ENCODE measurements at regions of chr2 and their contacts with region 1.

Region 1: GRCh38 chr2:100262555-100263320 is 59.6 kb downstream of the LONRF2 start:
- DNase-seq: peak; percentile 18
- H3K4me3 ChIP-seq: no peak overlapping the region
- H3K27ac ChIP-seq: no peak overlapping the region
- H3K4me1 ChIP-seq: no peaks in the 10 kb centered on the region
- H3K27me3 ChIP-seq: no peaks in the 10 kb centered on the region
- CTCF ChIP-seq: peak; percentile 90 to 96

Region 2: GRCh38 chr2:99725820-99726219 is 536.9 kb before region 1 on chr2:
- CTCF ChIA-PET with region 1: no interaction called
- dilution Hi-C with region 1: no loop called
- in situ Hi-C with region 1: no loop called
- intact Hi-C with region 1: loop called (anchors 10 kb)
- DNase-seq: no peak
- H3K4me3 ChIP-seq: no peak overlapping the region
- H3K27ac ChIP-seq: no peak overlapping the region
- H3K4me1 ChIP-seq: no peaks in the 10 kb centered on the region
- H3K27me3 ChIP-seq: no peaks in the 10 kb centered on the region
- CTCF ChIP-seq: peak in 1 of 2 donors; percentile 34

Region 3: DNA sequence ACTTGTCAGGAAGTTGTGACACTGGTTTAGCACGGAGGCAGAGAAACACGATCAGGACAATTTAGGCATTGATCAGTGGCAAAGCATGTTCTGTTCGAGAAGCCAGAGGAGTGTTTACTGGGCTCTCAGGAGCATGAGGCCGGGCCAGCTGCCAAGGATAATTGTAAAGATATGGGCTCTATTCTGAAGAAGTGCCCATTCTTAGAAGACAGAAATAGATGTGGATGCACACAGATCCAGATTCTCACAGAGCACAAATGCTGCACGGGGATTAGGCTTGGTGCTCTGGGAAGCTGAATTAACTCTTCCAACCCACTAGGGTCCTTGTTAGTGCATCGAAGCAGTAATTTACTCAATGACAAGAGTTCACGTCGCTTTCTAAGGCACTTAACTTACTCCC is 136.5 kb before region 1 on chr2:
- CTCF ChIA-PET with region 1: no interaction called
- dilution Hi-C with region 1: no loop called
- in situ Hi-C with region 1: no loop called
- intact Hi-C with region 1: no loop called
- DNase-seq: no peak
- H3K4me3 ChIP-seq: no peak overlapping the region
- H3K27ac ChIP-seq: no peak overlapping the region
- H3K4me1 ChIP-seq: no peaks in the 10 kb centered on the region
- H3K27me3 ChIP-seq: no peaks in the 10 kb centered on the region
- CTCF ChIP-seq: no peak

Region 4: GRCh38 chr2:100381240-100381639 is 118.5 kb after region 1 on chr2:
- CTCF ChIA-PET with region 1: interaction called, 34 read pairs
- dilution Hi-C with region 1: loop called (anchors 5 kb)
- in situ Hi-C with region 1: loop called (anchors 5 kb)
- intact Hi-C with region 1: loop called (anchors 1 kb)
- DNase-seq: peak; percentile 57
- H3K4me3 ChIP-seq: no peak overlapping the region
- H3K27ac ChIP-seq: no peak overlapping the region
- H3K4me1 ChIP-seq: no peaks in the 10 kb centered on the region
- H3K27me3 ChIP-seq: no peaks in the 10 kb centered on the region
- CTCF ChIP-seq: peak; percentile 92 to 93

Region 5: DNA sequence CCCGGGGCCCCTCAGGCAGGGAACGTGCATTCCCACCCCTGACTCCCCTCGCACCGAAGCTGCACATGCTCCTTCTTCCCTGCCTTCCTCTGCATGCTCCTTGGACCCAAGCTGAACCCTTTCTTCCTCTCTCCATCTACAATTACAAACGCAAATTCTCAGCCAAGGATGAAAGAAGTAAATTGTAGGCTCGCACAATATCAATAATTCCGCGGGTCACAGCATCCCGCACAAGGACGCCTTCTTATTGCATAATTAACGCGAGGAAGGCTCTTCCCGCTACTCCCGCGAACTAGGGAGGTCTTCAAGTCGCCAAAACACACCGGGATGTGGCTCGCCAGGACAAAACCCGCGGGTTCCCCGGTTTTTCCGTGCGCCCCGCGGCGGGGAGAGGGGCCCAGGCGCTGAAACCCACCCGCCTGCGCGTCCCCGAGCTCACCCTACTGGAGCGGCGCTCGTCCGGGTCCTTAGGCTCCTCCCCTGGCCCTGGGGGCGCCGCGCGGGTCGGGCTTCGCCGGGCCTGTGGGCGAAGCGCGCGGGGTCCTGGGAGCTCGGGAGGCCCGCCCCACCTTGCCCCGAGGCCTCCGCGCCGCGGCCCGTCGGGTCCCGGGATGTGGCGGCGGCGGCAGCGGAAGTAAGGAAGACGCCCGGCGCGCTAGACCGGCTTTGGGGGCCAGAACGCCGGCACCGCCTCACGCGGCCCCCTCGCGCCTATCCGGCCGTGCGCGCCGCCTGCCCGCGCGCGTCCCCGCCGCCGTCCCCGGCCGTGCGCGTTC is 154.4 kb after region 1 on chr2 and contains the start of gene CHST10:
- CTCF ChIA-PET with region 1: no interaction called
- dilution Hi-C with region 1: no loop called
- in situ Hi-C with region 1: no loop called
- intact Hi-C with region 1: loop called (anchors 2 kb)
- DNase-seq: peak; percentile 21
- H3K4me3 ChIP-seq: peak within 1 kb of the TSS; percentile 65 to 75 (median 66)
- H3K27ac ChIP-seq: peak within 1 kb of the TSS; percentile 24
- H3K4me1 ChIP-seq: peaks cover 9% of the 10 kb centered on the region
- H3K27me3 ChIP-seq: no peaks in the 10 kb centered on the region
- CTCF ChIP-seq: no peak
- total RNA-seq, gene CHST10: 6.7 to 9.3 TPM

Region 6: GRCh38 chr2:100675855-100676254 is 413.1 kb after region 1 on chr2:
- CTCF ChIA-PET with region 1: no interaction called
- dilution Hi-C with region 1: no loop called
- in situ Hi-C with region 1: no loop called
- intact Hi-C with region 1: no loop called
- DNase-seq: no peak
- H3K4me3 ChIP-seq: no peak overlapping the region
- H3K27ac ChIP-seq: no peak overlapping the region
- H3K4me1 ChIP-seq: no peaks in the 10 kb centered on the region
- H3K27me3 ChIP-seq: peaks cover 1% of the 10 kb centered on the region
- CTCF ChIP-seq: no peak